Activated CD4-positive, alpha-beta T cell treated with anti-CD3 and anti-CD28 coated beads, Interleukin-2, amount 10 ng/mL, durations not matched to agents 7 days and 5 days (primary cell): ENCODE measurements at regions of chr2 and their contacts with region 1.

Region 1: GRCh38 chr2:152635635-152636298 is 81.5 kb downstream of the PRPF40A start:
- DNase-seq: peak; percentile 75
- H3K4me3 Mint-ChIP-seq: no peak overlapping the region
- H3K27ac Mint-ChIP-seq: no peak overlapping the region
- H3K4me1 Mint-ChIP-seq: no peaks in the 10 kb centered on the region
- H3K27me3 Mint-ChIP-seq: peaks cover 3% of the 10 kb centered on the region

Region 2: GRCh38 chr2:152175458-152176325 is 460.1 kb before region 1 on chr2 and contains the start of gene STAM2:
- CTCF ChIA-PET with region 1: interaction called, 18 read pairs
- POLR2A ChIA-PET with region 1: no interaction called
- DNase-seq: peak; percentile 92
- H3K4me3 Mint-ChIP-seq: peak within 1 kb of the TSS; percentile 97
- H3K27ac Mint-ChIP-seq: peak within 1 kb of the TSS; percentile 100
- H3K4me1 Mint-ChIP-seq: peaks cover 34% of the 10 kb centered on the region
- H3K27me3 Mint-ChIP-seq: no peaks in the 10 kb centered on the region
- total RNA-seq, gene STAM2: 16.5 to 20.1 TPM

Region 3: GRCh38 chr2:152585830-152586484 is 49.8 kb before region 1 on chr2:
- CTCF ChIA-PET with region 1: no interaction called
- POLR2A ChIA-PET with region 1: no interaction called
- DNase-seq: no peak
- H3K4me3 Mint-ChIP-seq: no peak overlapping the region
- H3K27ac Mint-ChIP-seq: no peak overlapping the region
- H3K4me1 Mint-ChIP-seq: no peaks in the 10 kb centered on the region
- H3K27me3 Mint-ChIP-seq: peaks cover 5% of the 10 kb centered on the region